Ascending aorta (tissue), 2 donors: ENCODE measurements at regions of chr6 and their contacts with region 1.

Region 1: DNA sequence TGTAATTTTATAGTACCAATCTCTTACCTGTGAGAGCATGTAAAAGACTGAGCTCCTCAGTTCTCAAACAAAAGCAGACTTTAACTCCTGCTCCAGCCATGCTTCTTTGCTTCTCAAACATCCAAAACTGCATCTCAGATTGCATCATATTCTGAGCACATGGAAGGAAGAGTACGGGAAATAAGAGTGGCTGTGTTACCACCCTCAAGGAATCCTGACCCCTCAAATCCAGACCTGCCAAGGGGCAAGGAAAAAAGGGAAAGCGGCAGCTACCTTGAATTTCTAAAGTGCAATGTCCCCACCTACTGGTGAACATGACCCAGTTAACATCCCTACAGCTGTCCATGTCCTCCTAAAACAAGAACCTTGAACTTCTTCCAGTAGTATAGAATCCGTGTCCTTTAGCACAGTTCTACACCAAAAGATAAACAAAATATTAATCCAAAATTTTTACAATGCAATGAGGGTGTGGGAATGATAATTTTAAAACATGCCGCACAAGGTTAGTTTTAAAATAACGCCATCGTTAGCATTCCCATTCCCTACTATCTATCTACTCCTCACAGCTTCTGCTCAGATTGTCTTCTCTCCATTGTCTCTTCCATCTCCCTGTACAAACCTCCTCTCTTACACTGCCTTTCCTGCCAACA is 34.1 kb upstream of the HLA-DQB1 start:
- DNase-seq: no peak
- H3K4me3 ChIP-seq: no peak overlapping the region
- H3K27ac ChIP-seq: no peak overlapping the region
- H3K4me1 ChIP-seq: no peaks in the 10 kb centered on the region
- H3K27me3 ChIP-seq: no peaks in the 10 kb centered on the region
- CTCF ChIP-seq: peak; percentile 29 to 42 (median 30)

Region 2: DNA sequence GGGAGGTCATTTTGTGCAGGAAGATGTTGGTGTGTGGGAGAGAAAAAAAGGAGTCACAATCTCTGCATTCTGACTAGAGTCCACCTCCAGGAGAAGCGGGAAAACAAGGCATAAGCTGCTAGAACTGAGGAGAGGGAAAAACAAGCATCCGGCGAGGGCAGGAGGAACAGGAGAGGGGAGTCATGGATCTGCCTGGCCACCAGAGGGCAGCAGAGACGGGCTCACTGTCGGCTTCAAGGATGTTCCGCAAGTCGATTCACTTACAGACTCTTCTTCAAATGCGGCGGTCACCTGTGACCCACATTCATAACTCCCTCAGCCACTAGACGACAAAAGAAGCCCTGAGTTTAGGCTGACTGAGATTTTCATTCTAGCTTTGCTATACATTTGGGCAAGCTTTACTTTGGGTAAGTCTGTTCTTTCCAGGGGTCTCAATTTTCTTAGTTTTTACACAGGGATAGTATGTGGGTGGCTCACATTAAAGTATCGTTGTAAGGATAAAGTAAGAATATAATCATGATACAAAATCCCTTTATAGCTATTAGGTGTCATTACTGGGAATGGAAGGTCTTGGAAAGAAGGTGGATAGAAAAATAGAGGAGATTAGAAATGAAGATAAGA is 287.0 kb before region 1 on chr6:
- intact Hi-C with region 1: loop called (anchors 5 kb)
- DNase-seq: peak in 1 of 2 donors; percentile 81
- H3K4me3 ChIP-seq: no peak overlapping the region
- H3K27ac ChIP-seq: no peak overlapping the region
- H3K4me1 ChIP-seq: peaks cover 0 to 3% of the 10 kb centered on the region in 2 donors
- H3K27me3 ChIP-seq: no peaks in the 10 kb centered on the region
- CTCF ChIP-seq: peak; percentile 71 to 90 (median 88)

Region 3: GRCh38 chr6:32432050-32432450 is 268.5 kb before region 1 on chr6:
- intact Hi-C with region 1: loop called (anchors 2 kb)
- DNase-seq: no peak
- H3K4me3 ChIP-seq: no peak overlapping the region
- H3K27ac ChIP-seq: no peak overlapping the region
- H3K4me1 ChIP-seq: no peaks in the 10 kb centered on the region
- H3K27me3 ChIP-seq: no peaks in the 10 kb centered on the region
- CTCF ChIP-seq: peak; percentile 21 to 46 (median 38)

Region 4: DNA sequence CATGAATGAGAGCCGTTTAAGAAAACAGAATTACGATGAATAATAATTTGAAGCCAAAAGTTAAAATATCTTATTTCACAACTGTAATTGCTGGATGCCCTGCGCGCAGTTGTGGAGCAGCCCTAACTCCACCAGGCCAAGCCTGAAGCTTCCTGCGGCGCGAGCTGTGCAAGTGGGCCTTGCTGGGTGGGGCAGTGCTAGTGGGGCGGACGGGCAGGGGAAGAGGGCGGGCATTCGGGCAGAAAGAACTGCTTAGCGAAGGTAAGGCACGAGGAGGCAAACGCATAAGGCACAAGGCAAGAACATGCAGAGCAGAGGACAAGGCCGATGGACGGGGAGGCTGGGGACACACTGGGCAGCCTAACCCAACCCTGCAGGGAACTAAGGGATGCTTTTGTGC is 60.6 kb after region 1 on chr6:
- intact Hi-C with region 1: no loop called
- DNase-seq: no peak
- H3K4me3 ChIP-seq: no peak overlapping the region
- H3K27ac ChIP-seq: no peak overlapping the region
- H3K4me1 ChIP-seq: no peaks in the 10 kb centered on the region
- H3K27me3 ChIP-seq: no peaks in the 10 kb centered on the region
- CTCF ChIP-seq: no peak